SK-N-SH (cell line): ENCODE measurements at regions of chr20 and their contacts with region 1.

Region 1: GRCh38 chr20:21235484-21236445 is 67.4 kb upstream of the XRN2 start:
- DNase-seq: peak; percentile 65
- H3K4me3 ChIP-seq: no peak overlapping the region; a peak in 1 of 4 replicates
- H3K27ac ChIP-seq: no peak overlapping the region
- H3K4me1 ChIP-seq: peaks cover 0 to 3% of the 10 kb centered on the region in 2 experiments; a peak in 2 of 4 replicates
- H3K27me3 ChIP-seq: no peaks in the 10 kb centered on the region
- CTCF ChIP-seq: peak; percentile 92
- EP300 ChIP-seq: no peak
- RAD21 ChIP-seq: peak; percentile 81

Region 2: GRCh38 chr20:20872428-20872827 is 363.3 kb before region 1 on chr20:
- CTCF ChIA-PET with region 1: interaction called, 10 read pairs
- POLR2A ChIA-PET with region 1: no interaction called
- DNase-seq: no peak
- H3K4me3 ChIP-seq: no peak overlapping the region
- H3K27ac ChIP-seq: no peak overlapping the region
- H3K4me1 ChIP-seq: no peaks in the 10 kb centered on the region
- H3K27me3 ChIP-seq: no peaks in the 10 kb centered on the region; the same call in 1 of the 2 replicates
- CTCF ChIP-seq: no peak
- EP300 ChIP-seq: no peak
- RAD21 ChIP-seq: no peak

Region 3: GRCh38 chr20:21219686-21220085 is 16.1 kb before region 1 on chr20:
- CTCF ChIA-PET with region 1: interaction called, 47 read pairs
- POLR2A ChIA-PET with region 1: no interaction called
- DNase-seq: no peak
- H3K4me3 ChIP-seq: no peak overlapping the region
- H3K27ac ChIP-seq: no peak overlapping the region
- H3K4me1 ChIP-seq: peaks cover 0 to 3% of the 10 kb centered on the region in 2 experiments; a peak in 2 of 4 replicates
- H3K27me3 ChIP-seq: no peaks in the 10 kb centered on the region
- CTCF ChIP-seq: no peak
- EP300 ChIP-seq: no peak
- RAD21 ChIP-seq: no peak

Region 4: GRCh38 chr20:21272279-21272678 is 36.5 kb after region 1 on chr20:
- CTCF ChIA-PET with region 1: interaction called, 16 read pairs
- POLR2A ChIA-PET with region 1: no interaction called
- DNase-seq: no peak
- H3K4me3 ChIP-seq: no peak overlapping the region
- H3K27ac ChIP-seq: no peak overlapping the region
- H3K4me1 ChIP-seq: no peaks in the 10 kb centered on the region; a peak in 1 of 4 replicates
- H3K27me3 ChIP-seq: peaks cover 17% of the 10 kb centered on the region
- CTCF ChIP-seq: no peak
- EP300 ChIP-seq: no peak
- RAD21 ChIP-seq: no peak

Region 5: DNA sequence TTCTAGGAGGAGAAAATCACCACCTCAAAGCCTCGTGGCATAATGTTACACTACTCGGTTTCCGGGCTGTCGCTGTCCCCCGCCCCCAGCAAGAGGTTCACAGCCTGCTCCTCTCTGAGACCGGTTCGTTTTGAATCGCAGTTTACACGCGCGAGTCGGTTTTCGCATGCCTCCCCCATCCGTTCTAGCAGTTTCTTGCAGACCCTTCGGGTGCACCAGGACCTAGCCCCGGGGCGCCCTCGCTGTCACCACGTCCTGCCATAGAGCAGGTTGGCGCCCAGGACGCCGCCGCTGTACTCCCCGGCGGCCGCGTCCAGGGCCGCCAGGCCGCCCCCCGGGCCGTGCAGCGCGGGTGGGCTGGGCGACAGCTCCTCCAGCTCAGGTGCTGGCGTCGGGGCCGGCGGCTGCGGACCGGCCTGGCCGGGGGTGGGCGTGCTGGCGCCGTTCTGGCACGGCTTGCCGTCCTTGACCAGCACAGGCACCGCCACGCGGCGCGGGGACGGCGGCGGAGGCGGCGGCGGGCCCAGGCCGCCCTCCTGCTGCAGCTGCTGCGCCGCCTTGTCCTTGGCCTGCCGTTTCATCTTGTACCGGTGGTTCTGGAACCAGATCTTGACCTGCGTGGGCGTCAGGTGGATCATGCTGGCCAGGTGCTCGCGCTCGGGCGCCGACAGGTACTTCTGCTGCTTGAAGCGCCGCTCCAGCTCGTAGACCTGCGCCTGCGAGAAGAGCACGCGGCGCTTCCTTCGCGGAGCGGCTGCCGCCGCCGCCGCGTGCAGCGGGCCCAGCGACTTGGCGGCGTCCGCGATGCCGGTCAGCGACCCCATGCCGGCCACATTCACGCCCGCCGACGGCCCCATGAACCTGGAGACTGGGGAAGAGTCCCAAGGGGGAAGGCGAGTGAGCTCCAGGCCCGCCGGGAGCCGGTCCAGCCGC is 160.2 kb after region 1 on chr20:
- CTCF ChIA-PET with region 1: interaction called, 27 read pairs
- POLR2A ChIA-PET with region 1: no interaction called
- DNase-seq: peak; percentile 68
- H3K4me3 ChIP-seq: no peak overlapping the region; a peak in 1 of 4 replicates
- H3K27ac ChIP-seq: no peak overlapping the region
- H3K4me1 ChIP-seq: no peaks in the 10 kb centered on the region; a peak in 1 of 4 replicates
- H3K27me3 ChIP-seq: peaks cover 50% of the 10 kb centered on the region
- CTCF ChIP-seq: no peak
- EP300 ChIP-seq: no peak
- RAD21 ChIP-seq: no peak

Region 6: DNA sequence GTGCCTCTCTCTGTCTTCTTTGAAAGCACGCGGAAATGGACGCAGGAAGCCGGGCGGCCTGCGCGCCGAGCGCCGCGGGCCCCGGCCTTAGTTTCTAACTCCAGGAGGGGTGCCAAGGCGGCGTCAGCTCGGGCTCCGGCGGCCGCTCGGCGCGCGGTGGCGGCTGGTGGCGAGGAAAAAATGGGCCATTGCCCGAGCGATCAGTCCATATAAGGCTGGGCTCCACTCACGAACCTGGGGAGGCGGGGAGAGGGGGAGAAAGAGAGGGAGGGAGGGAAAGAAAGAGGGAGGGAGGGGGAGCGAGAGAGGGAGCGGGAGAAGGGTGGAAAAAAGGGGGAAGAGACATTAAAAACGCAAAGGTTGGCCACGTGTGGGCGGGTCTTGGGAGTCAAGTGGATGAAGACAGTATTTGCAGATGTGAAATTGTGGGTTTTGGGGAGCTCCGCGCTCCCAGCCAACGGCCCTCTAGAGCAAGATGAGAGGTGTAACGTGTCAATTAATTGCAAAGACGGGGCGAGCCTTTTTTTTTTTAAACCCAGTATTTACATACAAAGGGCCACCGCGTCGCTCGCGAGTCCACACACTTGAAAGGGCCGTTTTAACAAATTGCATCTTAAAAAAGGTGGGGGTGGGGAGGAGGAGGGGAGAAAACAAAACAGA is 278.2 kb after region 1 on chr20 and contains the start of gene NKX2-2:
- CTCF ChIA-PET with region 1: interaction called, 21 read pairs
- POLR2A ChIA-PET with region 1: no interaction called
- DNase-seq: peak; percentile 32
- H3K4me3 ChIP-seq: 0 out of 4 replicates have a peak within 1 kb of the TSS, but pooled peaks of 1 of the 2 experiments have one; percentile 23
- H3K27ac ChIP-seq: no peak within 1 kb of the TSS
- H3K4me1 ChIP-seq: no peaks in the 10 kb centered on the region
- H3K27me3 ChIP-seq: peaks cover 94% of the 10 kb centered on the region
- CTCF ChIP-seq: no peak
- EP300 ChIP-seq: no peak
- RAD21 ChIP-seq: no peak
- polyA plus RNA-seq, gene NKX2-2: not detected in 2 replicates